ENCODE measurements at regions of chr19 and their contacts with region 1.

Region 1: GRCh38 chr19:46753420-46754155 is 7.3 kb upstream of the STRN4 start:
- DNase-seq: peak; percentile 83
- H3K4me3 Mint-ChIP-seq: no peak overlapping the region
- H3K27ac Mint-ChIP-seq: no peak overlapping the region
- H3K4me1 Mint-ChIP-seq: peaks cover under 1% of the 10 kb centered on the region
- H3K27me3 Mint-ChIP-seq: no peaks in the 10 kb centered on the region

Region 2: DNA sequence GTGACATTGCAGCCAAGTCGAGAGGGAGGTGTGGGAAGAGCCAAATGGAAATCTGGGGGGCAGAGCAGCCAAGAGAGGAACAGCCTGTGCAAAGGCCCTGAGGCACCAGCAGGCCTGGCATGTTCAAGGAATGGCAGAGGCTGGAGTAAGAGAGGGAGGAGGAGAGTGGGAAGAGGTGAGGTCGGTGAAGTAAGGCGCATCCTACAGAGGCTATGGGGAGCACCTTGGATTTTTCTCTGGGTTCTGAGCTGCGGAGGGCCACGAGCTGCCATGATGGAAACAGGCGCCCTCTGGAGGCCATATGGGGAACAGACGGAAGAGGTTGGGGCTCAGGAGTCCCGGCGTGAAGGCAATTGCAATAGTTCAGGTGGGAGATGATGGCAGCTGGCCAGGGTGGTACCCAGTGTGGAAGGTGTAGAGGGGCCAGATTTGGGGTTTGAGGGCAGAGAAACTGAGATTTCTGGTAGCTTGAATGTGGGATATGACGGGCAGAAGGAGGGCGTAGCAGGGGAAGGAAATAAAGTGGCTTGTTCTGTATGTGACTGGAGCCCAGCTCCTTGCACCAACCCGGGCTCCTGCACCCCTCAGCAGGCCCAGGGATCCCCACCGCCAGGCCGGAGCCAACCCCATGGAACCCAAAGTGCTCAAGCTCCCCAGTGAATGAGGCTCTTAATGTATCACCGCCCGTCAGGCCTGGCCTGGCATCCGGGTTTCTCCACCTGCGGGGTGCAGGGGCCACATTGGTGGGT is 13.2 kb after region 1 on chr19:
- CTCF ChIA-PET with region 1: interaction called, 39 read pairs
- POLR2A ChIA-PET with region 1: no interaction called
- intact Hi-C with region 1: no loop called
- DNase-seq: peak; percentile 76
- H3K4me3 Mint-ChIP-seq: no peak overlapping the region
- H3K27ac Mint-ChIP-seq: no peak overlapping the region
- H3K4me1 Mint-ChIP-seq: peaks cover 2% of the 10 kb centered on the region
- H3K27me3 Mint-ChIP-seq: no peaks in the 10 kb centered on the region

Region 3: GRCh38 chr19:46776927-46777911 is 23.6 kb after region 1 on chr19:
- CTCF ChIA-PET with region 1: interaction called, 12 read pairs
- POLR2A ChIA-PET with region 1: interaction called, 4 read pairs
- intact Hi-C with region 1: no loop called
- DNase-seq: peak; percentile 34
- H3K4me3 Mint-ChIP-seq: no peak overlapping the region
- H3K27ac Mint-ChIP-seq: peak overlapping the region; percentile 33
- H3K4me1 Mint-ChIP-seq: peaks cover 12% of the 10 kb centered on the region
- H3K27me3 Mint-ChIP-seq: no peaks in the 10 kb centered on the region

Measured in activated CD4-positive, alpha-beta memory T cell treated with anti-CD3 and anti-CD28 coated beads for 36 hours (primary cell).